HEK293T (cell line): ENCODE measurements at regions of chr6 and their contacts with region 1.

Region 1: DNA sequence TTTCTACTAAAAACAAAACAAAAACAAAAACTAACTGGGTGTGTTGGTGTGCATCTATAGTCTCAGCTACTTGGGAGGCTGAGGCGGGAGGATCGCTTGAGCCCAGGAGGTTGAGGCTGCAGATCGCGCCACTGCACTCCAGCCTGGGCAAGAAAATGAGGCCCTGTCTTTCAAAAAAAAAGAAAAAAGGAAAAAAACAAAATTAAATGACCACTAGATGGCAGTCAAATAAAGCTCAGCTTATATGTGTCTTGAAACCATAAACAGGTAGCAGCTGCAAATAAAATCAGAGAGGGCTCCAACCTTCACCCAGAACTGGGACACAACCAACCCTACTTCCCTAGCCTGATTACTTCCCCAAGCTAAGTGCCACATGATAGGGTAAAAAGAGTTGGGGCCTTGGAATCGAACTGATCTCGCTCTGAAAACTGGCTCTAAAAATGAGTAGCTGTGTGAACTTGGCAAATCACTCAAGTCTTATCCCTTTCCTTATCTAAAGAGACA is 67.1 kb upstream of the ADGRF4 start:
- DNase-seq: peak; percentile 54

Region 2: DNA sequence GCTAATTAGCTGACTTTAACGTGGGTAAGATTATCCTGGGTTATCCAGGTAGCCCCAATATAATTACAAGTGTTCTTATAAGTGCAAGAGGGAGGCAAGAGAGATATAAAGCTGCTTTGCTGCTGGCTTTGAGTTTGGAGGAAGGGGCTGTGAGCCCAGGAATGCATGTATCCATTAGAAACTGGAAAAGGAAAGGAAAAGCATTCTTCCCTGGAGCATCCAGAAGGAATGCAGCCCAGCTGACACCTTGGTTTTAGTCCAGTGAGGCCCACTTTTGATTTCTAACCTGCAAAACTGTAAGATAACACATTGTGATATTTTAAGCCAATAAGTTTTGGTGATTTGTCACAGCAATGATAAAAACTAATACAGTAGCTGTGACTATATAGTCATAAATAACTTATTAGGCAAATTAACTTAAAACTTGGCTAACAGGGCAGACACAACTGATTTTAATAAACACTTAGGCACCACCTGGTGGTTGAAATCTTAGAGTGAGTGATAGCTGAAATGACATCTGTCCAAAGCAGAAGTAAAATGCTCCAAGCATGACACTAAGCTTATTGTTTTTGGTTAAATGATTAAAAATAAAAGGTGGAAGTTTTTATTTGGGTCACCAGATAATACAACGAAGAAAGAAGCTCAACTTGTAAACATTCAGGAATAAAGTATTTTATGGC is 102.7 kb after region 1 on chr6:
- CTCF ChIA-PET with region 1: interaction called, 24 read pairs
- POLR2A ChIA-PET with region 1: no interaction called
- DNase-seq: no peak

Region 3: DNA sequence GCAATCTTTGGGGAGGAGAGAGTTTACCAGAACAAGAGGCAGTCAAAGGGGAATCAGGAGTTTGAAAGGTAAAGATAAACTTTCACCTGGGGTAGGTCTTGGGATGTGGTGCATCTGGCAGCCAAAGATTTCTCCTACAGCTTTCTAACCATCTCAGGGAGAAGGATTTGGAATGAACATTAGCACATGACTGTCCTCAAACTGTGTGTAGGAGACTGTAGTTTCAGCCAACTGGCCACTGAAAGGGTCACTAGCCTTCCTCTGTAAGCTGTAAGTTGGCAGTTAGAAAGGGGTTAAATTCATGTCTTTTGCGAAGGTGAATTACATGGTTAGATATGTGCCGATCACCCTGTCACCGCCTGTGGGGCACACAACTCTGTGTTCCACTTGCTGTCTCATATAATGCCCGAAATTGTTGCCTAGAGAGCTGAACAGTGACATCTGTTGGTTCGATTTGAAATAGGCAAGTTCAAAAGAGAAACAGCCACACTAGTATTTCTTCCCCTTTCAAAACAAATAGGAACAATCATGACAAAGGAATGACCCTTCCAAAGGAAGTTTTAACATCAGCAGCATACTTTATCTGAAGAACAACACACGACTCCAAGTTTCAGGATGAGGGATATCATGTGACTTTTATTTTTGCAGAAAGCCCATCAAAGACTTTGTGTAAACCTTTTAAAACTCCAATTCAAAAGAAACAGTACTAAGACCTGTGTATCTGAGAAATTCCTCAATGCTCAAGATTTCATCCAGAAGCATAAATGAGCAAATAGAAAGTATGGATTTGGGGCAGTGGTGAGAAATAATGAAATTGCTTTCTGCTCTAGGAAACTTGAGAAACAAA is 149.4 kb after region 1 on chr6:
- CTCF ChIA-PET with region 1: interaction called, 20 read pairs
- POLR2A ChIA-PET with region 1: interaction called, 4 read pairs
- DNase-seq: peak; percentile 59